ENCODE measurements at regions of chr10 and their contacts with region 1.

Region 1: GRCh38 chr10:93482145-93482834 is at the start of gene MYOF:
- DNase-seq: peak in 1 of 2 donors; percentile 76
- ATAC-seq: peak; percentile 93
- H3K4me3 ChIP-seq: peak within 1 kb of the TSS; percentile 87 to 99
- H3K27ac ChIP-seq: peak within 1 kb of the TSS; percentile 84 to 98
- H3K4me1 ChIP-seq: peaks cover 0 to 3% of the 10 kb centered on the region in 2 donors
- H3K27me3 ChIP-seq: no peaks in the 10 kb centered on the region
- total RNA-seq, gene MYOF: 226 to 242 TPM

Region 2: DNA sequence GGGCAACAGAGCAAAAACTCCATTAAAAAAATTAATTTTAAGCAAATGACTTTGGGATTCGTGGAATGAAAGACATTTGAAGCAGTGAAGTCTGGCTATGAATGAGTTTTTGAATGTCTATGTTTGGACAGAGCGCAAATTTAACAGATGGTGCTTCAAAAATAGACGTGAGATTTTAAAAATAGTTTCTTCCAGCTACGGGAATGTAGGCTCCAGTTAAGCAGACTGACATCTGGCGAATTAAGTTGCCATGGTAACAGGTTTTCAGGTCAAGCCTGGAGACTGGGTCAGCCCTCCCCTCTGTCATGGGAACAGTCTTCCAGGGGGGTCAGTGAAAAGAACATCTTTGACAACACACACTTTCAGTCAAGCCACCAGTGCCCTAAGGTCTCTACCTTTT is 62.2 kb before region 1 on chr10:
- intact Hi-C with region 1: loop called in 1 of 2 experiments (anchors 5 kb)
- DNase-seq: no peak
- ATAC-seq: peak; percentile 71
- H3K4me3 ChIP-seq: no peak overlapping the region
- H3K27ac ChIP-seq: peak overlapping the region in 1 of 2 donors; percentile 78
- H3K4me1 ChIP-seq: peaks cover 2 to 3% of the 10 kb centered on the region in 2 donors
- H3K27me3 ChIP-seq: no peaks in the 10 kb centered on the region

Region 3: DNA sequence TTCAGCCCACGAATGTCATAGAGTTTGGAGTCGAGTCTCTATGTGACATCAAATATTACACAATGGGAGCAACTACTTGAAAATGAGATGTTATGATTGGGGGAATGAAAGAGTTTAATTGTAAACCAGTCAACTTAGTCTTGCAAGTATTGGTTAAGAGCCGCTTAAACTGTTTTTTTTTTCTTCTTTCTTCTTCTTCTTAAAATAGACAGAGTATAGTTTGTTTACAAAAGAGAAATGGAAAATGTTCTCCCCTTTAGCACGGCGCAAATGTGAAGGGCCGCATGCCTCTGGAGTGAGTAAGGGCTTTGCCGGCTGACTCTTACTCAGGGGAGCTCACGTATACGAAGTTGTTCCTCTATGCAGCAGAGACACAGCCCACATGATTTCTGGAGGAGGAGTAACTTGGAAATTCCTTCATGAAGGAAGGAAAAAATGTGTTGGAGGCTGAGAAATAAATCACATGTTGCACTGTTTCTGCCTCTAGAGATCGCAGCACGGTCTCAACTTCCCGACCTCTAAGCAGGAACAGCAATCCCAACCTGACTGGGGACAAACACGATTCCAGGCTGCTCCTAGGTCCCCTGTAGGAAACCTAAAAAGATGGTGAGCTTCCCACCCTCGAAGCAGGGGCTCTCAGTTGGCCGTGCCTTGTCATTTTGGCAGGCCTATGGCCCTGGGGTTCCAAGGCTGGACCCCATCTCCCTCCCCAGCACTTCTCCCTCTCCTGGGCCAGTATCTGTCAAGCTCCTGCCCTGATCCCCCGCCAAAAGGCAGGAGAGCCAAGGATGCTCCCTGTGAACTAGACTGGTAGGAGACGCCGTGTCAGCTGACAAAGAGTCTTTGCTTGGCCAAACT is 45.0 kb before region 1 on chr10:
- intact Hi-C with region 1: loop called (anchors 2 to 5 kb)
- DNase-seq: peak; percentile 92
- ATAC-seq: peak; percentile 94
- H3K4me3 ChIP-seq: no peak overlapping the region
- H3K27ac ChIP-seq: peak overlapping the region; percentile 100
- H3K4me1 ChIP-seq: peaks cover 2 to 9% of the 10 kb centered on the region in 2 donors
- H3K27me3 ChIP-seq: no peaks in the 10 kb centered on the region

Region 4: DNA sequence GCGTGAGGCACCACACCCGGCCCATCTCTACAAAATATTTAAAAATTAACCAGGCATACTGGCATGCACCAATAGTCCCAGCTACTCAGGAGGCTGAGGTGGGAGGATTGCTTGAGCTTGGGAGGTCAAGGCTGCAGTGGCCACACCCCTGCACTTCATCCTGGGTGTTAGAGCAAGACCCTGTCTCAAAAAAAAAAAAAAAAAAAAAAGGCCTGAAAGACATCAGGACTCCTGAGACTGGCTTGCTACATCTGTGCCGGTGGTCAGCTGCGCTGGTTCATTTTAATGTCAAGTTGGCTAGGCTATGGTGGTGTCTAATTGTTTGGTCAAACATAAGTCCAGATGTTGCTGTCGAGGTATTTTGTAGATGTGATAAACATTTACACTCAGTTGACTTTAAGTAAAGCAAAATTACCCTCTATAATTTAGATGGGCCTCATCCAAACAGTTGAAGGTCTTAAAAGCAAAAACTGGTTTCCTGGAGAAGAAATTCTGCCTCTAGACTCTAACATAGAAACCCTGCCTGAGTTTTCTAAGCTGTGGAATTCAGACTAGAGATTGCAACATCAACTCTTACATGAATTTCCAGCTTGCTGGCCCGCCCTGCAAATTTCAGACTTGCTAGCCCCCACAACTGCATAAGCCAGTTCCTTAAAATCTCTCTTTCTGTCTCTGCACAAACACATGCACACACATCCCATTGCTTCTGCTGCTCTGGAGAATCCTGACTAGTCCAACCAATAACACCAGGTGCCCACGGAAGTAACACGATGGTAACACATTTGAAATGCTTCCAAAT is 18.4 kb before region 1 on chr10:
- intact Hi-C with region 1: loop called in 1 of 2 experiments (anchors 2 kb)
- DNase-seq: peak in 1 of 2 donors; percentile 77
- ATAC-seq: peak; percentile 49
- H3K4me3 ChIP-seq: no peak overlapping the region
- H3K27ac ChIP-seq: peak overlapping the region; percentile 83 to 86
- H3K4me1 ChIP-seq: peaks cover 3 to 19% of the 10 kb centered on the region in 2 donors
- H3K27me3 ChIP-seq: no peaks in the 10 kb centered on the region

Measured in aorta (tissue), 5 donors.